K562 (cell line): ENCODE measurements at regions of chr4 and their contacts with region 1.

Region 1: GRCh38 chr4:25439918-25440477 is 62.9 kb downstream of the ANAPC4 start:
- DNase-seq: peak; percentile 71 to 79 (median 78)
- ATAC-seq: peak; percentile 91
- H3K4me3 ChIP-seq: no peak overlapping the region
- H3K27ac ChIP-seq: no peak overlapping the region
- H3K4me1 ChIP-seq: no peaks in the 10 kb centered on the region; a peak in 1 of 5 replicates
- H3K27me3 ChIP-seq: peaks cover 10 to 38% of the 10 kb centered on the region in 2 experiments; a peak in 4 of 5 replicates
- CTCF ChIP-seq: peak; percentile 81 to 89 (median 85)
- EP300 ChIP-seq: no peak
- POLR2A ChIP-seq: no peak
- RAD21 ChIP-seq: peak; percentile 46 to 68

Region 2: GRCh38 chr4:25424539-25425228 is 15.3 kb before region 1 on chr4:
- CTCF ChIA-PET with region 1: no interaction called
- POLR2A ChIA-PET with region 1: interaction called, 3 read pairs
- in situ Hi-C with region 1: no loop called
- intact Hi-C with region 1: loop called (anchors 1 kb)
- DNase-seq: no peak
- ATAC-seq: no peak
- H3K4me3 ChIP-seq: no peak overlapping the region
- H3K27ac ChIP-seq: no peak overlapping the region
- H3K4me1 ChIP-seq: peaks cover 0 to 5% of the 10 kb centered on the region in 2 experiments; a peak in 1 of 5 replicates
- H3K27me3 ChIP-seq: no peaks in the 10 kb centered on the region; a peak in 1 of 5 replicates
- CTCF ChIP-seq: no peak
- EP300 ChIP-seq: no peak
- POLR2A ChIP-seq: no peak
- RAD21 ChIP-seq: no peak

Region 3: GRCh38 chr4:25523405-25523804 is 83.4 kb after region 1 on chr4:
- CTCF ChIA-PET with region 1: no interaction called
- POLR2A ChIA-PET with region 1: no interaction called
- in situ Hi-C with region 1: no loop called
- intact Hi-C with region 1: no loop called
- DNase-seq: no peak
- ATAC-seq: no peak
- H3K4me3 ChIP-seq: no peak overlapping the region
- H3K27ac ChIP-seq: no peak overlapping the region
- H3K4me1 ChIP-seq: no peaks in the 10 kb centered on the region
- H3K27me3 ChIP-seq: peaks cover 6 to 19% of the 10 kb centered on the region in 2 experiments
- CTCF ChIP-seq: no peak
- EP300 ChIP-seq: no peak
- POLR2A ChIP-seq: no peak
- RAD21 ChIP-seq: no peak

Region 4: DNA sequence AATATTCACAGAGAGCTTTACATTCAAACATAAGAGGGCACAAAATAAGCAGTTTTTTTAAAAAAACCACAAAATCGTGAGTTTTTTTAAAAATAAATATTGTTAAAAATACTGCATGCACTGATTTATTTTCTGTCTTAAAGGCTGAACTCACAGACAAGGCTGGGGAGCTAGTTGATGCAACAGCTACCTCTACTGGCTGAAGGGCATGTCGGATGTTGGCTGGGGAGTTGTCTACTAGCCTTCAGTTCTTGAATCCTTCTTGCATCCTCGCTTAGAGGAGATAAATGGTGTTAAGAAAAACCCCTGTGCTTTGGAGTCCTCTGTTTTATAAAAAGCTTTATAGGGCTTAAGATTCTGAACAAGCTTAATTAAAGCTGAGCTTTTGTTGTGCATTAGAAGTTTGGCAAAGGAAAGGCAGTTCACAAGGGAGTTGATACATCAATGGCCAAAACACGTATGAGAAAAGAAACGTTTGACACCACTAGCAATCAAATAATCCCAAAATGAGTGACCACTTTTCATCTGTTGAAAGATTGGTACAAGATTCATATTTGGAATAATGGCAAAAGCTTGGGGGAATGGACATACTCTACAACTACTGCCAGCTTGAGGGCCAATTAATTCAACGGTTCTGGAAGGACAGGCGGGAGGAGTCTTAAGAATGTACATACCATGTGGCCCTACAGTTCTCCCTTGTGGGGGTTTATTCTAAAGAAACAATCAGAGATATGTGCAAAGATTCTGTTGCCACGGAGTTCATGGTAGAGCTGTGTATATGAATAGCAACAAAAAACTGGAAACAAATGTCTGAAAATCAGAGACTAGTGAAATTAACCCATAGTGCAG is 328.1 kb after region 1 on chr4:
- CTCF ChIA-PET with region 1: interaction called, 4 read pairs
- POLR2A ChIA-PET with region 1: no interaction called
- in situ Hi-C with region 1: no loop called
- intact Hi-C with region 1: loop called (anchors 2 kb)
- DNase-seq: peak; percentile 29 to 66 (median 48)
- ATAC-seq: peak; percentile 88
- H3K4me3 ChIP-seq: no peak overlapping the region
- H3K27ac ChIP-seq: no peak overlapping the region
- H3K4me1 ChIP-seq: no peaks in the 10 kb centered on the region
- H3K27me3 ChIP-seq: no peaks in the 10 kb centered on the region
- CTCF ChIP-seq: peak; percentile 57 to 79 (median 62)
- EP300 ChIP-seq: no peak
- POLR2A ChIP-seq: no peak
- RAD21 ChIP-seq: peak; percentile 62 to 73

Region 5: GRCh38 chr4:25783943-25784342 is 343.9 kb after region 1 on chr4:
- CTCF ChIA-PET with region 1: interaction called, 3 read pairs
- POLR2A ChIA-PET with region 1: no interaction called
- in situ Hi-C with region 1: loop called (anchors 10 kb)
- intact Hi-C with region 1: no loop called
- DNase-seq: no peak
- ATAC-seq: no peak
- H3K4me3 ChIP-seq: no peak overlapping the region
- H3K27ac ChIP-seq: no peak overlapping the region
- H3K4me1 ChIP-seq: no peaks in the 10 kb centered on the region
- H3K27me3 ChIP-seq: no peaks in the 10 kb centered on the region
- CTCF ChIP-seq: no peak
- EP300 ChIP-seq: no peak
- POLR2A ChIP-seq: no peak
- RAD21 ChIP-seq: no peak

Region 6: DNA sequence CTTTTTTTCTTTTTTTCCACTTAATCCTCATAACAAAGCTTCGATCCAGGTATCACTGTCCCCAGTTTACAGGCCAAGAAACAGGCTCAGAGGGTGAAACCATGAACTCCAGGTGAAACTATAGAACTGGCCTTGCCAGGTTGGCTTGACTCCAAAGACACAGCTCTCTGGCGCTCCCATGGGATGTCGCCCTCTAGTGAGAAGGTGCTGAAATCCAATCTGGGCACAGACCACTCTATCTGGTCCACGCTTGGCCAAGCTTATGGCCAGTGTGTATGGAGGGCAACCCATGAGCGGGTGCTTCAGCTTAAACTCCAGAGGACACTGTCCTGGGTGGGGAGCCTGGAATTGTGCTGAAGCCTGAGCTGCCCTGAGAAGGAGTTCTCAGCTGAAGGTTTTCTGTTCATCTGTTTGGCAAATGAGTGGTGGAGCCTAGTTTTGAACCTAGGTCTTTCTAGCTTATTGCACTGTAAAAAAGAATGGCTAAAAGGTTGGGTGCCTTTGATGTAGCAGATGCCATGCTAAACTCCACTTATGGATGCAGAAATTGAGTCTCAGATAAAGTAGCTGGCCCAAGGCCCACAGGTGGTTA is 352.3 kb after region 1 on chr4:
- CTCF ChIA-PET with region 1: no interaction called
- POLR2A ChIA-PET with region 1: no interaction called
- in situ Hi-C with region 1: loop called (anchors 10 kb)
- intact Hi-C with region 1: loop called (anchors 10 kb)
- DNase-seq: peak; percentile 30 to 61 (median 42)
- ATAC-seq: peak; percentile 91
- H3K4me3 ChIP-seq: no peak overlapping the region
- H3K27ac ChIP-seq: no peak overlapping the region
- H3K4me1 ChIP-seq: no peaks in the 10 kb centered on the region
- H3K27me3 ChIP-seq: no peaks in the 10 kb centered on the region
- CTCF ChIP-seq: peak; percentile 67 to 75 (median 72)
- EP300 ChIP-seq: no peak
- POLR2A ChIP-seq: no peak
- RAD21 ChIP-seq: peak; percentile 33 to 46

Region 7: GRCh38 chr4:25981749-25982148 is 541.8 kb after region 1 on chr4:
- CTCF ChIA-PET with region 1: no interaction called
- POLR2A ChIA-PET with region 1: no interaction called
- in situ Hi-C with region 1: no loop called
- intact Hi-C with region 1: loop called (anchors 10 kb)
- DNase-seq: no peak
- ATAC-seq: no peak
- H3K4me3 ChIP-seq: no peak overlapping the region
- H3K27ac ChIP-seq: no peak overlapping the region
- H3K4me1 ChIP-seq: no peaks in the 10 kb centered on the region; a peak in 1 of 5 replicates
- H3K27me3 ChIP-seq: peaks cover 19 to 50% of the 10 kb centered on the region in 2 experiments; a peak in 4 of 5 replicates
- CTCF ChIP-seq: no peak
- EP300 ChIP-seq: no peak
- POLR2A ChIP-seq: no peak
- RAD21 ChIP-seq: no peak